ENCODE measurements at regions of chr9 and their contacts with region 1.

Region 1: GRCh38 chr9:1726993-1727759 is 288.0 kb upstream of the SMARCA2 start:
- DNase-seq: peak; percentile 13
- ATAC-seq: peak; percentile 19
- H3K4me3 Mint-ChIP-seq: no peak overlapping the region
- H3K27ac Mint-ChIP-seq: no peak overlapping the region
- H3K4me1 Mint-ChIP-seq: no peaks in the 10 kb centered on the region
- H3K27me3 Mint-ChIP-seq: peaks cover 11% of the 10 kb centered on the region

Region 2: GRCh38 chr9:1939926-1940368 is 212.8 kb after region 1 on chr9:
- CTCF ChIA-PET with region 1: interaction called, 5 read pairs
- POLR2A ChIA-PET with region 1: no interaction called
- intact Hi-C with region 1: loop called in 1 of 2 experiments (anchors 1 kb)
- DNase-seq: peak; percentile 62
- ATAC-seq: peak; percentile 83
- H3K4me3 Mint-ChIP-seq: no peak overlapping the region
- H3K27ac Mint-ChIP-seq: no peak overlapping the region
- H3K4me1 Mint-ChIP-seq: no peaks in the 10 kb centered on the region
- H3K27me3 Mint-ChIP-seq: peaks cover 7% of the 10 kb centered on the region